T-cell (primary cell): ENCODE measurements at regions of chr7 and their contacts with region 1.

Region 1: GRCh38 chr7:138886501-138886917 is 88.5 kb upstream of the ATP6V0A4 start:
- DNase-seq: peak in 23 of 35 experiments; percentile 1 to 86 (median 29)
- ATAC-seq: peak; percentile 86 to 92 (median 88)
- H3K4me3 ChIP-seq: no peak overlapping the region
- H3K4me3 Mint-ChIP-seq: peak overlapping the region in 1 of 3 donors; percentile 22
- H3K27ac ChIP-seq: no peak overlapping the region
- H3K27ac Mint-ChIP-seq: peak overlapping the region; percentile 69 to 83
- H3K4me1 ChIP-seq: peaks cover 3 to 9% of the 10 kb centered on the region in 2 experiments
- H3K4me1 Mint-ChIP-seq: peaks cover 17 to 21% (median 19%) of the 10 kb centered on the region in 3 donors
- H3K27me3 ChIP-seq: peaks cover 0 to 4% of the 10 kb centered on the region in 2 experiments
- H3K27me3 Mint-ChIP-seq: peaks cover 0 to 3% of the 10 kb centered on the region in 2 donors

Region 2: GRCh38 chr7:138871065-138871813 is 15.3 kb before region 1 on chr7:
- CTCF ChIA-PET with region 1: interaction called, 6 to 11 read pairs
- POLR2A ChIA-PET with region 1: no interaction called
- DNase-seq: no peak
- ATAC-seq: no peak
- H3K4me3 ChIP-seq: no peak overlapping the region
- H3K4me3 Mint-ChIP-seq: no peak overlapping the region
- H3K27ac ChIP-seq: no peak overlapping the region
- H3K27ac Mint-ChIP-seq: no peak overlapping the region
- H3K4me1 ChIP-seq: peaks cover 3 to 8% of the 10 kb centered on the region in 2 experiments
- H3K4me1 Mint-ChIP-seq: peaks cover 11 to 17% (median 13%) of the 10 kb centered on the region in 3 donors
- H3K27me3 ChIP-seq: peaks cover 0 to 10% of the 10 kb centered on the region in 2 experiments
- H3K27me3 Mint-ChIP-seq: peaks cover 0 to 6% of the 10 kb centered on the region in 2 donors

Region 3: GRCh38 chr7:138900035-138900828 is 13.7 kb after region 1 on chr7:
- CTCF ChIA-PET with region 1: interaction called, 7 to 13 read pairs
- POLR2A ChIA-PET with region 1: no interaction called
- DNase-seq: no peak
- ATAC-seq: no peak
- H3K4me3 ChIP-seq: no peak overlapping the region
- H3K4me3 Mint-ChIP-seq: no peak overlapping the region
- H3K27ac ChIP-seq: no peak overlapping the region
- H3K27ac Mint-ChIP-seq: no peak overlapping the region
- H3K4me1 ChIP-seq: peaks cover 23 to 31% of the 10 kb centered on the region in 2 experiments
- H3K4me1 Mint-ChIP-seq: peaks cover 48 to 64% (median 59%) of the 10 kb centered on the region in 3 donors
- H3K27me3 ChIP-seq: peaks cover 0 to 11% of the 10 kb centered on the region in 2 experiments
- H3K27me3 Mint-ChIP-seq: peaks cover 4 to 17% of the 10 kb centered on the region in 2 donors

Region 4: DNA sequence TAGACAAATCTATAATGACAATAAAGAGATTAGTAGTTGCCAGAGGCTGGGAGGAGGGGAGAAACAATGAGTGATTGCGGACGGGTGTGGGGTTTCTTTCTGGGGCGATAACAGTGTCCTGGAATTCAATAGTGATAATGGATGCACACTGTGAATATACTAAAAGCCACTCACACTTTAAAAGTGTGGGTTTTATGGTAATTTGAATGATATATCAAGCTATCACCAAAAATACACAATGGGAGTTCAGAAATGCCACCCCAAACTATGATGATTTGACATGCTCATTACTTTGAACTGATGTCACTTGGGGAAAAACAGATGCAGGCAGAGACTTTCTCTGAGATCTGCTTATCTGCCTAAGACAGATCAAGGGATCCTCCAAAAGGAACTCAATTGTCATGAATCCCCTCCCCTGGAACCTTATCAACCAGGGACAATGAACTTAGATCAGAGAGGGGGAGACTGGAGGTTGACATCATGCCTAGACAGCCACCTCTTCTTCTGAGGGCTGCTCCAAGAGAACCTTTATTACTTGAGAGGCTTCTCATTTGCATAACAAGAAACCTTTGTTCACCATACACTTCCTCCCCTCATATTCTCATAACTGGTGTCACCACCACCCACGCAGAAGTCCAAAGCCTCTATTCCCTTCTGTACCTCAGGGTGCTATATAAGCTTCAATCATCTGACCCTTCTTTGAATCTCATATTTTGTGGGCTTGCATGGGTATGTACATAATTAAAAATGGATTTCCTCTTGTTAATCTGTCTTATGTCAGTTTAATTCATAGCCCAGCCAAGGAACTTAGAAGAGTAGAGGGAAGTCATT is 237.8 kb after region 1 on chr7:
- CTCF ChIA-PET with region 1: interaction called, 7 to 18 read pairs
- POLR2A ChIA-PET with region 1: no interaction called
- DNase-seq: no peak
- ATAC-seq: no peak
- H3K4me3 ChIP-seq: no peak overlapping the region
- H3K4me3 Mint-ChIP-seq: no peak overlapping the region
- H3K27ac ChIP-seq: no peak overlapping the region
- H3K27ac Mint-ChIP-seq: no peak overlapping the region
- H3K4me1 ChIP-seq: peaks cover 2 to 4% of the 10 kb centered on the region in 2 experiments
- H3K4me1 Mint-ChIP-seq: peaks cover 7 to 31% (median 18%) of the 10 kb centered on the region in 3 donors
- H3K27me3 ChIP-seq: no peaks in the 10 kb centered on the region
- H3K27me3 Mint-ChIP-seq: no peaks in the 10 kb centered on the region